ENCODE measurements at regions of chr3 and their contacts with region 1.

Region 1: GRCh38 chr3:113287803-113288648 is 76.7 kb downstream of the BOC start:
- DNase-seq: peak; percentile 73
- H3K4me3 Mint-ChIP-seq: no peak overlapping the region
- H3K27ac Mint-ChIP-seq: no peak overlapping the region
- H3K4me1 Mint-ChIP-seq: peaks cover 9% of the 10 kb centered on the region
- H3K27me3 Mint-ChIP-seq: no peaks in the 10 kb centered on the region
- CTCF ChIP-seq: peak; percentile 97

Region 2: GRCh38 chr3:113035387-113035982 is 252.5 kb before region 1 on chr3:
- CTCF ChIA-PET with region 1: interaction called, 39 read pairs
- POLR2A ChIA-PET with region 1: no interaction called
- intact Hi-C with region 1: loop called (anchors 5 kb)
- DNase-seq: peak; percentile 76
- H3K4me3 Mint-ChIP-seq: no peak overlapping the region
- H3K27ac Mint-ChIP-seq: no peak overlapping the region
- H3K4me1 Mint-ChIP-seq: peaks cover 5% of the 10 kb centered on the region
- H3K27me3 Mint-ChIP-seq: no peaks in the 10 kb centered on the region
- CTCF ChIP-seq: peak; percentile 61

Region 3: DNA sequence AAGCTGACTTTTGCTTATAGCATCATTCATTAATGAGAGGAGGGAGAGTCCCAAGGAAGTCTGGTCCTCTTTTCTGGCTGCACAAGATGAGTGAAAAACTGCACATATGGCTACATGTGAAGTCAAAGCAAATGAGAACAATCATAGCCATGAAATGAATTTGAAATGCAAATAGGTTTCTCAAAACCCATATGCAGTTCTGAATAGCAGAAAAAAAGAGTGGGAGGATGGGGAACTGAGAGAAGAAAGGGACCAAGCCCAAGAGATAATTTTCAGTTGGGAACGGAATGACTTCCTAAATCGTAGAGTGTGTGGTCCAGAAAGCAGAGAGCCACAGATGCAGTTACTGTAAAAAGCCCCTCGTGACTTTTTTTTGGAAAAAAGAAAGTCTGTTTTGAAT is 230.9 kb before region 1 on chr3:
- CTCF ChIA-PET with region 1: interaction called, 104 read pairs
- POLR2A ChIA-PET with region 1: interaction called, 3 read pairs
- intact Hi-C with region 1: no loop called
- DNase-seq: no peak
- H3K4me3 Mint-ChIP-seq: no peak overlapping the region
- H3K27ac Mint-ChIP-seq: no peak overlapping the region
- H3K4me1 Mint-ChIP-seq: no peaks in the 10 kb centered on the region
- H3K27me3 Mint-ChIP-seq: no peaks in the 10 kb centered on the region
- CTCF ChIP-seq: no peak

Region 4: DNA sequence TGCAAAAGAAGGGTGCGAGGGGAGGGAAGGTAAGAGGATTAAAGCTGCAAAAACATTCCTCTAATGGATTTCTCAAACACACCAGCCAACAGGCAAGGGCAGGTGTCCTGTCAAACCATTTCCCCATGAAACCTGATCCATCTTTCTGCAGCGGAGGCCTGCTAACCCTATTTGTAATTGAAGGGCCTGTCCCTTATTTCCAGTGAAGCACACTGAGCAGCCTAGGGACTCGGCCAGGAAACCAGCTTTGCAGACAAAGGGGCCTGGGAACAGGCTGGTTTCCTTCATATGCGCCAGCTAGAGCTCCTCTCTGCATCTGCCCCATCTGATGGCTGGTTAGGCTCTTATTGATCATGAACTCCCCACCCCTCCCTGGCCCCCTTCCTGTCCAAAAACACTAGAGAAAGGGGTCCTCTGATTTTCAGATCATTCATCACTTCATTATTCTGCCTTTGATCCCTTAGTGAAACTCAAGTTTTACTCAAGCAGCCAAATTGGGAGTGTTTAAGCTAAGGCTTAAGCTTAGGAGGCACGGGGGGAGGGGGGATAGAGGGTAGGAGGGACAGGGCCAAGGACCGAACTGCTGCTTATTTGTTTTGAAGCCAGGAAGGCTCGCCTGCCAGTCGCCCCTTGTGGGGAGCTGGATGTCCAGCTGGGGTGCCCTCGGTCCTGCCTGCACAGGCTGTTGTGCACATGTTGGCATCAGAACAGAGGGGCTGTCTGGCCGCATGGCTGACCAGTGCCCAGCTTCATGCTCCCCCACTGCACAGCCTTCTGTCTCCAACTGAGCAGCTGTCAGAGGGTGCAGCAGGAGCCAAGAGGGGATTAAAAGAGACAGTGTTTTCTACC is 23.5 kb before region 1 on chr3:
- CTCF ChIA-PET with region 1: interaction called, 26 read pairs
- POLR2A ChIA-PET with region 1: interaction called, 3 read pairs
- intact Hi-C with region 1: no loop called
- DNase-seq: no peak
- H3K4me3 Mint-ChIP-seq: no peak overlapping the region
- H3K27ac Mint-ChIP-seq: no peak overlapping the region
- H3K4me1 Mint-ChIP-seq: peaks cover 12% of the 10 kb centered on the region
- H3K27me3 Mint-ChIP-seq: no peaks in the 10 kb centered on the region
- CTCF ChIP-seq: no peak

Region 5: GRCh38 chr3:113626503-113627371 is 338.7 kb after region 1 on chr3:
- CTCF ChIA-PET with region 1: interaction called, 4 read pairs
- POLR2A ChIA-PET with region 1: no interaction called
- intact Hi-C with region 1: loop called (anchors 5 kb)
- DNase-seq: peak; percentile 74
- H3K4me3 Mint-ChIP-seq: no peak overlapping the region
- H3K27ac Mint-ChIP-seq: no peak overlapping the region
- H3K4me1 Mint-ChIP-seq: peaks cover 13% of the 10 kb centered on the region
- H3K27me3 Mint-ChIP-seq: no peaks in the 10 kb centered on the region
- CTCF ChIP-seq: peak; percentile 90